ENCODE measurements at regions of chr4 and their contacts with region 1.

Region 1: GRCh38 chr4:154854362-154854761 is 73.3 kb downstream of the RBM46 start:
- DNase-seq: no peak
- H3K4me3 ChIP-seq: no peak overlapping the region
- H3K27ac ChIP-seq: no peak overlapping the region
- H3K4me1 ChIP-seq: peaks cover 0 to 6% of the 10 kb centered on the region in 2 donors
- H3K27me3 ChIP-seq: no peaks in the 10 kb centered on the region
- CTCF ChIP-seq: peak in 4 of 6 experiments; percentile 25 to 79 (median 62)
- POLR2A ChIP-seq: no peak

Region 2: DNA sequence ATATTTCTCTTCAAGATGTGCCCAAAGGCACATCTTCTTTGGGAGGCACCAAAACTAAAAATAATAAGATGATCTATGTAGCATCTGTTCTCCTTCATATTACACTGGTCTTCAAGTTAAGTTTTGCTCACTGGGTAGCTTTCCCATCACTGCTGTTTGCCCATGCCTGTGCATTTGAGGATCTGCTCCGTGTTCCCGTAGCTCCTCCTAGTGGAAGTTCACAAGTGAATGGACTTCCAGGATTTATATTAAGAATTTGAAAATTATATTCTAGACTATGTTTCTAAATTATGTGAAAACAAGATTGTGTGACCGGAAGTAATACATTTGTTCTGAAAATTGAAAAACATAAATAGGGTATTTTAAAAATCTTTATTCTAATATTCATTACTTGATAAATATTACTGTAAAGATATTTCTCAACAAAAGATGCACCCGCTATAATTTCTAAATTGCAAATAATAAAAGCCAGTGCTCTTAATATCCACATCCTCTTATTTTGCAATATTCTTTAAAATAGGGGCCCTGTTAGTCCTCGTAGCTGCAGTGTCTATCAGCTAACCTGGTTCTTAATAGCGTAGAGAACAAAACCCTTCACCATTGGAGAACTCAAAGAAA is 74.4 kb after region 1 on chr4:
- intact Hi-C with region 1: loop called (anchors 5 kb)
- DNase-seq: peak; percentile 58 to 64
- H3K4me3 ChIP-seq: no peak overlapping the region
- H3K27ac ChIP-seq: no peak overlapping the region
- H3K4me1 ChIP-seq: peaks cover 16 to 22% of the 10 kb centered on the region in 2 donors
- H3K27me3 ChIP-seq: no peaks in the 10 kb centered on the region
- CTCF ChIP-seq: peak in 5 of 6 experiments; percentile 19 to 88 (median 70)
- POLR2A ChIP-seq: no peak